ENCODE measurements at regions of chr13 and their contacts with region 1.

Region 1: GRCh38 chr13:29595380-29596063 is at the start of gene SLC7A1:
- DNase-seq: peak; percentile 88
- H3K4me3 Mint-ChIP-seq: peak within 1 kb of the TSS; percentile 95
- H3K27ac Mint-ChIP-seq: peak within 1 kb of the TSS; percentile 95
- H3K4me1 Mint-ChIP-seq: peaks cover 51% of the 10 kb centered on the region
- H3K27me3 Mint-ChIP-seq: peaks cover 6% of the 10 kb centered on the region
- total RNA-seq, gene SLC7A1: 128 and 138 TPM in 2 replicates

Region 2: DNA sequence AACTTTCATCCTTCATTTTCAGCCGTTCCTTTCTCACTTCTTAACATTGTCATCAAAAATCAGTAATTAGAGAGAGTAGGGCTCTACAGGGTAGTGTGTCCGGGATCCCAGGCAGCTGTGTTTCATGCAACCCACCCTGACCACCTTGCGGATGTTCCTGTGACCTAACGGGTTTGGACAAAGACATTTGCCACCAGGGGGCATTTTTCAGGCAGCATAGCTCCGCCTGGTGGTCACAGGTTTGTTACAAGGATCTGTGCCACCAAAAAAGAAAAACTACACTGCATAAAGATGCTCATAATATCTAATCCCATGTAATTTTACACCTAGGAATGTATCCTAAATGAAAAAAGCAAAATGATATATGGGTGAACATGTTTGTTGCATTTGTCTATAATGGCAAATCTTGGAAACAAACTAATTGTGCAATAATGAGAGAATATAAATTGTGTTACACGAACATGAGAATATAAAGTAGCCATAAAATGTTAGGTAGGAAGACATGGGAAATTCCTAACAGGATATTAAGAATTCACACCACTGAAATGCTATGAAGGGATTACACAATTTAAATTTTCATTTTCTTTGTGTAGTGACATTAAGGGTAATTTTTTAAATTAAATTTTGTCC is 123.1 kb before region 1 on chr13:
- intact Hi-C with region 1: no loop called
- DNase-seq: peak; percentile 18
- H3K4me3 Mint-ChIP-seq: no peak overlapping the region
- H3K27ac Mint-ChIP-seq: no peak overlapping the region
- H3K4me1 Mint-ChIP-seq: no peaks in the 10 kb centered on the region
- H3K27me3 Mint-ChIP-seq: peaks cover 8% of the 10 kb centered on the region

Region 3: GRCh38 chr13:29575098-29575497 is 20.4 kb before region 1 on chr13:
- intact Hi-C with region 1: loop called (anchors 2 kb)
- DNase-seq: no peak
- H3K4me3 Mint-ChIP-seq: no peak overlapping the region
- H3K27ac Mint-ChIP-seq: no peak overlapping the region
- H3K4me1 Mint-ChIP-seq: peaks cover 30% of the 10 kb centered on the region
- H3K27me3 Mint-ChIP-seq: no peaks in the 10 kb centered on the region

Region 4: GRCh38 chr13:29758531-29759114 is 163.1 kb after region 1 on chr13:
- intact Hi-C with region 1: loop called (anchors 1 kb)
- DNase-seq: peak; percentile 26
- H3K4me3 Mint-ChIP-seq: peak overlapping the region; percentile 32
- H3K27ac Mint-ChIP-seq: peak overlapping the region; percentile 74
- H3K4me1 Mint-ChIP-seq: peaks cover 22% of the 10 kb centered on the region
- H3K27me3 Mint-ChIP-seq: peaks cover 3% of the 10 kb centered on the region

Region 5: DNA sequence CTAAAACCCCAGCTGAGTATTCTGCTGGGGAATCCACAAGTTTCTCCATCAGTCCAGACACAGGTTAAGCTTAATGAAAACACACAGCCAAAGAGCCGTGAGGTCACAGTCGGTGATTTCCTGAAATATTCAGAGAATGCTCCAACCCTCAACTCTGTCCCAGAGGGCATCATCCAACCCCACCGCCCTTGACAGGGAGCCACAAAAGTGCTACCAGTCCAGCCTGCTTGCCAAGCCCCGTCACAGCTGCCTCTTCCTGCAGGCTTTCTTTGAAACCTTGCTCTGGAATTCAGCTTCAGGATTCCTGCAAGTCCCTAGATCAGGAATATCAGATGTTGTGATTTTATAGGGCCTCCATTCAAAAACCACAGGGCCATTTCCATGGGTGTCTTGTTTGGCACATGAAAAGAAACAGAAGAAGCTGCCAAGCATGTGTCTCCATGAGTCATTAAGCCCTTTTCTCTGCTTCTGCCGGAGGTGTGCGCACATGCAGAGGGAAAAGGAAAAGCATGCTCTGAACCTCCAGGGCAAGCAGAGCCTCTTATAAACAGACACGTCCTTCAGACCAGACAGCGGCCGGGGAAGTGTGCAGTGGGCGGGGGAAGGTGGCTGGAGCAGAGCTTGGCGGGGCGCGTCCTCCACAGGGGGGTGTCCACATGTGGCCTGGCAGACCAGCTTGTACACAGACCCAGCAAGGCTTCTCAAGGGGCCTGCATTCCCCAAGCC is 547.1 kb after region 1 on chr13:
- intact Hi-C with region 1: loop called (anchors 10 kb)
- DNase-seq: peak; percentile 28
- H3K4me3 Mint-ChIP-seq: peak overlapping the region; percentile 31
- H3K27ac Mint-ChIP-seq: peak overlapping the region; percentile 86
- H3K4me1 Mint-ChIP-seq: peaks cover 61% of the 10 kb centered on the region
- H3K27me3 Mint-ChIP-seq: peaks cover 4% of the 10 kb centered on the region

Region 6: DNA sequence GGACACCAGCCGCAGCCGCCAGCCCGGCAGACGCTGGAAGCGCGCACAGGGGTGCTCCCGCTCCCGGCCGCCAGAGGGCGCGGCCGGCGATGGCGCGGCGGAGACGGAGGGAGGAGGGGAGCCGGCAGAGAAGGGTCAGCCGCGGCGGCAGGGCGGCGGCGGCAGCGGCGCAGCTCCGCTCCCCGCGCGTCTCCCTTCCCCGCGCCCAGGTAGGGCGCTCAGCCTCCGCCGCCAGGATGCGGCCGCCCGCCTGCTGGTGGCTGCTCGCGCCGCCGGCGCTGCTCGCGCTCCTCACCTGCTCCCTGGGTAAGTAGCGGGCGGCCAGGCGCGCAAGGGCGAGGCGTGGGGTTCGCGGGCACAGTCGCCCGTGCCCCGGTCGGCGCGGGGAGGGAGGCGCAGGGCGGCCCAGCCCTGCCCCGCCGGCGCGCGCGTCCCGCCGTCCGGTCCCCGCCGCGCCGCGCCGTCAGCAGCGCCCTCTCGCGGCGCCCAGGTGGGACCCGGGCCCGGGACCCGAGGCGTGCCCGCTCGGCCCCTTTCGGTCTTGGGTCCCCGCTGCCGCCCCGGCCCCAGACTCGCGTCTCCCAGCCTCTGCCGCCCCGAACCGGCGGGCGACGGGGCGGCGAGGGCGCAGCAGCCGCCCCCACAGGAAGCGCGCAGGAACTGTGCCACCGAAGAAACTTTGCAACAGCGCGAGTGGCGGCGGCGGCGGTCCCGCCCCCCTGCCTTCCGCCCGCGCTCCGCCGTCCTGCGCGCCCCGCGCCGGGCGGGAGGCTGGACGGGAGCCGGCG is 1604.5 kb after region 1 on chr13 and contains the start of gene B3GLCT:
- intact Hi-C with region 1: loop called (anchors 10 kb)
- DNase-seq: peak; percentile 76
- H3K4me3 Mint-ChIP-seq: peak within 1 kb of the TSS; percentile 85
- H3K27ac Mint-ChIP-seq: peak within 1 kb of the TSS; percentile 80
- H3K4me1 Mint-ChIP-seq: peaks cover 32% of the 10 kb centered on the region
- H3K27me3 Mint-ChIP-seq: peaks cover 2% of the 10 kb centered on the region
- total RNA-seq, gene B3GLCT: 4.2 and 4.3 TPM in 2 replicates